Sigmoid colon (tissue), 7 donors: ENCODE measurements at regions of chr3 and their contacts with region 1.

Region 1: GRCh38 chr3:61381745-61382392 is 130.6 kb upstream of the FHIT start:
- DNase-seq: no peak
- H3K4me3 ChIP-seq: no peak overlapping the region
- H3K27ac ChIP-seq: no peak overlapping the region
- H3K4me1 ChIP-seq: no peaks in the 10 kb centered on the region
- H3K27me3 ChIP-seq: no peaks in the 10 kb centered on the region
- CTCF ChIP-seq: peak in 3 of 4 experiments; percentile 47 to 76 (median 56)
- EP300 ChIP-seq: no peak
- POLR2A ChIP-seq: no peak

Region 2: GRCh38 chr3:59575113-59576001 is 1806.5 kb before region 1 on chr3:
- intact Hi-C with region 1: loop called (anchors 10 kb)
- DNase-seq: peak; percentile 89
- H3K4me3 ChIP-seq: no peak overlapping the region
- H3K27ac ChIP-seq: no peak overlapping the region
- H3K4me1 ChIP-seq: peaks cover 0 to 21% (median 16%) of the 10 kb centered on the region in 4 donors
- H3K27me3 ChIP-seq: no peaks in the 10 kb centered on the region
- CTCF ChIP-seq: peak; percentile 65 to 93 (median 89)
- EP300 ChIP-seq: no peak
- POLR2A ChIP-seq: no peak

Region 3: GRCh38 chr3:61200270-61200669 is 181.6 kb before region 1 on chr3:
- intact Hi-C with region 1: no loop called
- DNase-seq: no peak
- H3K4me3 ChIP-seq: no peak overlapping the region
- H3K27ac ChIP-seq: no peak overlapping the region
- H3K4me1 ChIP-seq: peaks cover 0 to 7% (median 0%) of the 10 kb centered on the region in 4 donors
- H3K27me3 ChIP-seq: no peaks in the 10 kb centered on the region
- CTCF ChIP-seq: no peak
- EP300 ChIP-seq: no peak
- POLR2A ChIP-seq: no peak

Region 4: DNA sequence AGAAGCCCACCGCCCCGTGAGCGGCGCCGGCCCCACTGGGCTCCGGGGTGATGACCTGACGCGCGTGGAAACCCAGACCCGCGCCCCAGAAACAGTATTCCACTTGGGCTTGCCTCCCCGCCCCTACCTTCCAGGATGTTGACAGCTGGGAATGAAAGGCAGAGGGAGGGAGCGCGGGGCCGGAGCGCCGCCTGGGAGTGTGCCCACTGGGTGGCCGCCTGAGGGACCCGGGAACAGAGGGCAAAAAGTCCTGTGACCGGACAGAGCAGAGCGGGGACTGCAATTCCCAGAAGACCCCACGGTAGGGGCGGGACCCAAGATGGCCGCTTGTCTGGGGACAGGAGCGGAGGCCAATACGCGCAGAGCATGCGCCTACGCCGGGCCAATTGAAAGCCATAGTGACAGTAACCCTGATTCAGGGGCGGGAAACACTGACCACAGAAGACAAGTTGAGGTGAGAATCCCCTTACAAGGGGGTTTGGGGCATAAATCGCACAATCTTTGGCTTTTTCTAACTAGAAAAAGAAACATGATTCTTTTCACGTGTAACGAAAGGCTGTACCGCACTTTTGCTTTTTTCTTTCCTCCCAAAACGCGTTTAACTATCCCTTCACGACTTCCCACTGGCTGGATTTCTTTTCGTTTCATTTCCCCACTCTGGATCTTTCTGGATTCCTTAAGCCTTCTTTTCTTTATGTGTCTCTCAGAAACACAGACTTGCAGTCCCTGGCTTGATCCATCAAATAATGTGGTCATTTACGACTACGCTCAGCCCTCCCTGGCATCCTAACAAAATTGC is 130.5 kb before region 1 on chr3 and contains the start of gene FHIT:
- intact Hi-C with region 1: loop called (anchors 10 kb)
- DNase-seq: peak; percentile 97
- H3K4me3 ChIP-seq: peak within 1 kb of the TSS; percentile 64 to 83 (median 66)
- H3K27ac ChIP-seq: peak within 1 kb of the TSS; percentile 61 to 81 (median 74)
- H3K4me1 ChIP-seq: peaks cover 0 to 22% (median 9%) of the 10 kb centered on the region in 4 donors
- H3K27me3 ChIP-seq: no peaks in the 10 kb centered on the region
- CTCF ChIP-seq: no peak
- EP300 ChIP-seq: no peak
- POLR2A ChIP-seq: peak in 1 of 2 donors; percentile 40
- total RNA-seq, gene FHIT: 6.1 to 10.2 (median 9.6) TPM

Region 5: GRCh38 chr3:61483997-61484396 is 102.1 kb after region 1 on chr3:
- intact Hi-C with region 1: no loop called
- DNase-seq: no peak
- H3K4me3 ChIP-seq: no peak overlapping the region
- H3K27ac ChIP-seq: no peak overlapping the region
- H3K4me1 ChIP-seq: no peaks in the 10 kb centered on the region
- H3K27me3 ChIP-seq: no peaks in the 10 kb centered on the region
- CTCF ChIP-seq: no peak
- EP300 ChIP-seq: no peak
- POLR2A ChIP-seq: no peak

Region 6: DNA sequence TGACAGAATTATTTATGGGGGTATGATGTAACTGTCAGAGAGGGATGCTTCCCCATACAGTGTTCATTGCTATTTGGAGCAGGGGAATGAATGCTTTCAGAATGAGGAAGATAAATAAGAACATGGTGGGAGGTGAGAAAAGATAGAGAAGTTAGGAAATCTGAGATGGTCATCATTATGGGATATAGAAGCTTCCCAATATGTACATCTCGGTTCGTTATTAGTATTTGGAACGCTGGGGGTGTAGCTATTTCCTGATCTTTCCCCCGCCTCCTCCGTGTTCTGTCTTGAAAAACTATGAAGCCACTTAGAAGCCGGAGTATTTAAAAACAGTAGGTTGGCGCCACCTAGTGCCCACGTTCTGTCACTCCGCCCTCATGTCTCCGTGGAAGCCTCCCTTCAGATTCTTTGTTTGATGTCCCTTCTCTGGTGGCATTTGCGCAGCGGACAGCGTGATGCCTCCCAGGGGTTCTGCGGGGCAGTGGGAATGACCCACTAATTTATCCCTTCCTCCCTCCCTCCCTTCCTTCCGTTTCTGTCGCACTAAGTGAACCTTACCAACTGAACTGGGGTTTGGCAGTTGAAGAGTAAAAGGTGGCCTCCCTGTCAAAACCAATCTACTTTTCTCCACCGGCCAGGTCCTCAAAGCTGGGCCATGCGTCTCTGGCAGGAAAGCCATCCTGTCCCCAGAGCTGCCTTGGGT is 807.0 kb after region 1 on chr3:
- intact Hi-C with region 1: loop called (anchors 10 kb)
- DNase-seq: peak; percentile 88
- H3K4me3 ChIP-seq: no peak overlapping the region
- H3K27ac ChIP-seq: no peak overlapping the region
- H3K4me1 ChIP-seq: peaks cover 0 to 17% (median 4%) of the 10 kb centered on the region in 4 donors
- H3K27me3 ChIP-seq: no peaks in the 10 kb centered on the region
- CTCF ChIP-seq: peak; percentile 72 to 84 (median 78)
- EP300 ChIP-seq: no peak
- POLR2A ChIP-seq: no peak